ENCODE measurements at regions of chr7 and their contacts with region 1.

Region 1: DNA sequence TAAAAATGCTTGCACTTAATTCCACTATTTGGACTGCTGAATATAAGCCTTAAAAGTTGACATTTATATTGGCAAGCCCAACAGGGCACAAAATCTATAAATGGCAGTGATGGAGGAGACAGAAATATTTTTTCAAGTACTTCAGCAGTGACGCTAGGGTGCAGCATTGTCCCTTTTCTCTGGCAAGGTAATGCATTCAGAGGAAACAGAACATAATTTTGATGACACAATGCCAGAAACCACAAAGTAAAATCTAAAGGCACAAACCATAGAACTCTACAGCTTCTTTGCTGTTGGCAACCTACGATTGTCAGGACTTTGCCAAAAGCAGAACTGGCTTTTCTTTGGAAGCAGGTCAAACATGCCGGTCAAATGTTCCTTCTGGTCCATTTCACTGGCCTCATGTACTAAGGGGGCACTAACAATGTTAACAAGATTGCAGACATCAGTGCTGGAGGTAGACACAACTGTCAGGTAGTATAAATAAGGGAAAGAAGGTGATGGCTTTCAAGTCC is 30.9 kb upstream of the FAM133B start:
- DNase-seq: peak; percentile 39 to 84 (median 73)
- ATAC-seq: peak; percentile 96
- H3K4me3 ChIP-seq: no peak overlapping the region
- H3K4me3 Mint-ChIP-seq: peak overlapping the region in 9 of 10 donors; percentile 15 to 84 (median 54)
- H3K27ac ChIP-seq: peak overlapping the region; percentile 24
- H3K27ac Mint-ChIP-seq: peak overlapping the region; percentile 17 to 92 (median 84)
- H3K4me1 ChIP-seq: peaks cover 6 to 20% of the 10 kb centered on the region in 2 donors
- H3K4me1 Mint-ChIP-seq: peaks cover 8 to 58% (median 33%) of the 10 kb centered on the region in 7 donors
- H3K27me3 ChIP-seq: no peaks in the 10 kb centered on the region
- H3K27me3 Mint-ChIP-seq: no peaks in the 10 kb centered on the region

Region 2: GRCh38 chr7:92421676-92422435 is 199.2 kb before region 1 on chr7:
- CTCF ChIA-PET with region 1: no interaction called
- POLR2A ChIA-PET with region 1: no interaction called
- intact Hi-C with region 1: loop called in 1 of 2 experiments (anchors 1 kb)
- DNase-seq: no peak
- ATAC-seq: no peak
- H3K4me3 ChIP-seq: no peak overlapping the region
- H3K4me3 Mint-ChIP-seq: no peak overlapping the region
- H3K27ac ChIP-seq: no peak overlapping the region
- H3K27ac Mint-ChIP-seq: no peak overlapping the region
- H3K4me1 ChIP-seq: peaks cover 0 to 6% of the 10 kb centered on the region in 2 donors
- H3K4me1 Mint-ChIP-seq: peaks cover 5 to 16% (median 11%) of the 10 kb centered on the region in 7 donors
- H3K27me3 ChIP-seq: no peaks in the 10 kb centered on the region
- H3K27me3 Mint-ChIP-seq: peaks cover 2 to 16% (median 9%) of the 10 kb centered on the region in 5 donors

Region 3: GRCh38 chr7:92641921-92642511 is 20.9 kb after region 1 on chr7:
- CTCF ChIA-PET with region 1: interaction called, 4 read pairs
- POLR2A ChIA-PET with region 1: no interaction called
- intact Hi-C with region 1: loop called in 1 of 2 experiments (anchors 1 kb)
- DNase-seq: peak in 1 of 9 donors; percentile 73
- ATAC-seq: peak; percentile 83
- H3K4me3 ChIP-seq: no peak overlapping the region
- H3K4me3 Mint-ChIP-seq: peak overlapping the region in 9 of 10 donors; percentile 1 to 67 (median 26)
- H3K27ac ChIP-seq: peak overlapping the region; percentile 10
- H3K27ac Mint-ChIP-seq: peak overlapping the region in 8 of 9 donors; percentile 12 to 97 (median 68)
- H3K4me1 ChIP-seq: peaks cover 20 to 24% of the 10 kb centered on the region in 2 donors
- H3K4me1 Mint-ChIP-seq: peaks cover 45 to 85% (median 67%) of the 10 kb centered on the region in 7 donors
- H3K27me3 ChIP-seq: no peaks in the 10 kb centered on the region
- H3K27me3 Mint-ChIP-seq: no peaks in the 10 kb centered on the region

Region 4: DNA sequence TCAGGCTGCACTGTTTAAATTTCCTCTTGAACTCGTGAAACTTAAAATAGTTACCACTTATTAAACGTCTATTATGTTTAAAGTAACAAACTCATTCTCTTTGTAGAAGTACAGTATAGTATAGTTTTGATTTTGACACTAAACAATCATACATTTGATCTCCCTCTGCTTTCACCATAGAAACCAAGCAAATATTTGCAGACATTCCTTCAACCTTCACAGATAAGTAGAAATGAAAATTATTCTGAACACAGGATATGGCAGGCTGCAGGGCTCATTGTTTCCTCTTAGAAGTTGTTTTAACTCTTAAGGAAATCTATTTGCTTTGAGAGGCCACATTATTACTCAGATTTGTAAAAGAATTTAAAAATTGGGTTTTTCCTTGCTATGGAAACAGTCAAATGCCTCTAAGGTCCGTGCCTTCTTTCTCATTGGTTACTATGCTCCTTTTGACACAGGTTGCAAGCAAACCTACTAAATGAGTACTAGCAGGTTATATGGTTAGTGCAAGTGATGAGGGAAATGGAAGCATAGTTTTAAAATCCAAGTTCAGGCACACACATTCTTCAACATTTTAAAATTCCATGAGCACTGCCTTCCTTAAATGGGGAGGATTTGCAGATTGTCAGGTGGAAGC is 61.9 kb after region 1 on chr7:
- CTCF ChIA-PET with region 1: interaction called, 3 read pairs
- POLR2A ChIA-PET with region 1: no interaction called
- intact Hi-C with region 1: loop called in 1 of 2 experiments (anchors 1 kb)
- DNase-seq: peak in 7 of 9 donors; percentile 20 to 62 (median 46)
- ATAC-seq: peak; percentile 70
- H3K4me3 ChIP-seq: no peak overlapping the region
- H3K4me3 Mint-ChIP-seq: peak overlapping the region; percentile 22 to 66 (median 58)
- H3K27ac ChIP-seq: peak overlapping the region; percentile 70
- H3K27ac Mint-ChIP-seq: peak overlapping the region; percentile 27 to 87 (median 81)
- H3K4me1 ChIP-seq: peaks cover 32 to 54% of the 10 kb centered on the region in 2 donors
- H3K4me1 Mint-ChIP-seq: peaks cover 51 to 89% (median 86%) of the 10 kb centered on the region in 7 donors
- H3K27me3 ChIP-seq: no peaks in the 10 kb centered on the region
- H3K27me3 Mint-ChIP-seq: no peaks in the 10 kb centered on the region

Region 5: GRCh38 chr7:92717993-92718716 is 97.1 kb after region 1 on chr7:
- CTCF ChIA-PET with region 1: interaction called, 3 read pairs
- POLR2A ChIA-PET with region 1: no interaction called
- intact Hi-C with region 1: loop called in 1 of 2 experiments (anchors 1 kb)
- DNase-seq: peak in 8 of 9 donors; percentile 45 to 73 (median 62)
- ATAC-seq: peak; percentile 91
- H3K4me3 ChIP-seq: peak overlapping the region; percentile 62
- H3K4me3 Mint-ChIP-seq: peak overlapping the region; percentile 84 to 96 (median 94)
- H3K27ac ChIP-seq: peak overlapping the region; percentile 49
- H3K27ac Mint-ChIP-seq: peak overlapping the region; percentile 88 to 99 (median 96)
- H3K4me1 ChIP-seq: peaks cover 10 to 14% of the 10 kb centered on the region in 2 donors
- H3K4me1 Mint-ChIP-seq: peaks cover 26 to 73% (median 40%) of the 10 kb centered on the region in 7 donors
- H3K27me3 ChIP-seq: no peaks in the 10 kb centered on the region
- H3K27me3 Mint-ChIP-seq: no peaks in the 10 kb centered on the region

Region 6: DNA sequence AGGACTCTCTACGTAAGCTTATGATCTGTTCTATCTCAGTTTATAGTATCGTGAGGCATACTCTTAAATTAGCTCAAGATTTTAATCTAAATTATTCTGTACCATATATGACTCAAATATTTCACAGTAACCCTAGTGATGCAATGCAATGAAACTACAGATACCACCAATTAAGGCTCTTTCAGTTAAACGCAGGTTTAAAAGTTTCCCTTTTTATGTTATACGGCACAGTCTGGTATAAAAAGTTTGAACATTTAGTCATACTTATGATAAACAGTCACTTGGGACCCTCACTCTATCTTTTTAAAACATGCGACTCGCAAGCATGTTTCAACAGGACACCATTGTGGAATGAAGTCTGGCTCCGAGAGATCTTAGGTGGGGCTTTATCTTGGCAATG is 108.1 kb after region 1 on chr7:
- CTCF ChIA-PET with region 1: no interaction called
- POLR2A ChIA-PET with region 1: no interaction called
- intact Hi-C with region 1: no loop called
- DNase-seq: no peak
- ATAC-seq: no peak
- H3K4me3 ChIP-seq: no peak overlapping the region
- H3K4me3 Mint-ChIP-seq: no peak overlapping the region
- H3K27ac ChIP-seq: no peak overlapping the region
- H3K27ac Mint-ChIP-seq: peak overlapping the region in 1 of 9 donors; percentile 45
- H3K4me1 ChIP-seq: no peaks in the 10 kb centered on the region
- H3K4me1 Mint-ChIP-seq: peaks cover 14 to 64% (median 24%) of the 10 kb centered on the region in 7 donors
- H3K27me3 ChIP-seq: no peaks in the 10 kb centered on the region
- H3K27me3 Mint-ChIP-seq: no peaks in the 10 kb centered on the region

Region 7: GRCh38 chr7:92904292-92905131 is 283.4 kb after region 1 on chr7:
- CTCF ChIA-PET with region 1: no interaction called
- POLR2A ChIA-PET with region 1: no interaction called
- intact Hi-C with region 1: loop called in 1 of 2 experiments (anchors 1 kb)
- DNase-seq: peak in 8 of 9 donors; percentile 21 to 80 (median 42)
- ATAC-seq: peak; percentile 99
- H3K4me3 ChIP-seq: no peak overlapping the region
- H3K4me3 Mint-ChIP-seq: peak overlapping the region in 1 of 10 donors; percentile 44
- H3K27ac ChIP-seq: no peak overlapping the region
- H3K27ac Mint-ChIP-seq: peak overlapping the region in 2 of 9 donors; percentile 39 to 83
- H3K4me1 ChIP-seq: peaks cover 0 to 7% of the 10 kb centered on the region in 2 donors
- H3K4me1 Mint-ChIP-seq: peaks cover 0 to 23% (median 12%) of the 10 kb centered on the region in 7 donors
- H3K27me3 ChIP-seq: no peaks in the 10 kb centered on the region
- H3K27me3 Mint-ChIP-seq: peaks cover 0 to 5% (median 0%) of the 10 kb centered on the region in 5 donors

Region 8: GRCh38 chr7:93055543-93056107 is 434.5 kb after region 1 on chr7:
- CTCF ChIA-PET with region 1: interaction called, 4 read pairs
- POLR2A ChIA-PET with region 1: no interaction called
- intact Hi-C with region 1: loop called (anchors 1 kb)
- DNase-seq: peak in 6 of 9 donors; percentile 14 to 57 (median 41)
- ATAC-seq: peak; percentile 77
- H3K4me3 ChIP-seq: no peak overlapping the region
- H3K4me3 Mint-ChIP-seq: no peak overlapping the region
- H3K27ac ChIP-seq: no peak overlapping the region
- H3K27ac Mint-ChIP-seq: no peak overlapping the region
- H3K4me1 ChIP-seq: no peaks in the 10 kb centered on the region
- H3K4me1 Mint-ChIP-seq: peaks cover 0 to 16% (median 7%) of the 10 kb centered on the region in 7 donors
- H3K27me3 ChIP-seq: no peaks in the 10 kb centered on the region
- H3K27me3 Mint-ChIP-seq: peaks cover 0 to 12% (median 6%) of the 10 kb centered on the region in 5 donors

Measured in naive thymus-derived CD4-positive, alpha-beta T cell (primary cell).